ENCODE measurements at regions of chr3 and their contacts with region 1.

Region 1: DNA sequence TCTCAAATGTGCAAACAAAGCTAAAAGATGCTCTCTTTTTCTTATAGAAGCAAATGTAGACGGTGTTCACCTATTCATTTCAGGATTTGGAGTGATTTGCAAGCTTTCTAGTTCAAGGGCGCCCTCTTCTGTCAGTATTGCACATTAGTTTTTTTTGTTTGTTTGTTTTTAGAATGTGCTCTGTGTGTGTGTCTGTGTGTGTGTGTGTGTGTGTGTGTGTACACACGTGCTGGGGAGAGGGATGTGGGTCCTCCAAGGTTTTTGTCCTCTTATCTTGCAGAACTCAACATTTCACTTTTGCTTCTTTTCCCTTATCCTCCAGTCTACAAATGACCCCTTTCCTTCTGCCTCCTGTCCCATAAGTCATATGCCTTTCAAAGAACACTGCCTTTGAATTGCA is 23.5 kb downstream of the DNAH1 start:
- DNase-seq: peak; percentile 64
- H3K4me3 Mint-ChIP-seq: no peak overlapping the region
- H3K27ac Mint-ChIP-seq: no peak overlapping the region
- H3K4me1 Mint-ChIP-seq: peaks cover 3% of the 10 kb centered on the region
- H3K27me3 Mint-ChIP-seq: no peaks in the 10 kb centered on the region

Region 2: DNA sequence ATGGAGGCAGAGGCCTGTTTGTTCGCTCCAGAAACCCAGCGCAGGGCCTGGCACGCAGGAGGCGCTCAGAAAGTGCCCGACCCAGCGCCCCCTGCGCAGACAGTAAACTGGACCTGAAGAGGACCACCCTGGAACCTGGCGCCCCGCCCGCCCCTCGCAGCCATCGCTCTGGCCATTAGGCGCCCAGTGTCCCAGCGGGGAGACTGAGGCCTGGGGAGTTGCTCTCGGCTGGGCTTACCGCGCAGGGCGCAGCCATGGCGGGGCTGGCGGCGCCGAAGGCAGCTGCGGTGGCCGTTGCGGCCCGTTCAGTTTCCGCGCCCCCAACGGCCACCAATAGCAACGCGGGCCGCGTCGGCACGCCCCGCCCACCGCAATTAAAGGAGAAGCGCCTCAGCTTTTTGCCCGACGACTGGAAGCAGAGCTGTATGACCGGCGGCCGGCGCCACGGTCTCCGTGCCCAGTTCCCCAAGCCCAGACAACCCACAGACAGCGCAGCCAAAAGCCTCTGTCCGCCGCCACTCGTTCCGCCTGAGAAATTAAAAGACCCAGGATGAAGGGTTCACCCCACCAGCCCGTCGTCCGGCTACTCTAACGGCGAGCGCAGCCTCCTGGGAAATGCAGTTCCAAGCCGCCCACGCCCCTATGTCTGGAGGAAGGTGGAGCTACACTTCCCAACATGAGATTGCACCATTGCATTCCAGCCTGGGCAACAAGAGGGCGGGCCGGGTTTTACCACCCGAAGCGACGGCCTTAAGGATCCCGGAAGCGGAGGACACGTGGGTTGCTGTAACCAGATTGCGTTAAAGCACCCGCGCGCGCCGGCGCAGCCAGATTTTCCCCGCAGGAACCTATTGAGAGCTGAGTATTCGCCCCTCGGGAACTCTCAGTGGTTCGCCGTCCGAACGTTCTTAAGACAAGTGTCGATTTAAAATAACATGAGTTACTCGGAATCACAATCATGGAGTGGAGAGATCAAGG is 185.2 kb before region 1 on chr3 and contains the start of gene POC1A:
- CTCF ChIA-PET with region 1: interaction called, 5 read pairs
- intact Hi-C with region 1: loop called (anchors 1 kb)
- DNase-seq: peak; percentile 96
- H3K4me3 Mint-ChIP-seq: peak within 1 kb of the TSS; percentile 91
- H3K27ac Mint-ChIP-seq: peak within 1 kb of the TSS; percentile 92
- H3K4me1 Mint-ChIP-seq: peaks cover 18% of the 10 kb centered on the region
- H3K27me3 Mint-ChIP-seq: no peaks in the 10 kb centered on the region
- total RNA-seq, gene POC1A: 32.3 to 32.7 TPM

Region 3: DNA sequence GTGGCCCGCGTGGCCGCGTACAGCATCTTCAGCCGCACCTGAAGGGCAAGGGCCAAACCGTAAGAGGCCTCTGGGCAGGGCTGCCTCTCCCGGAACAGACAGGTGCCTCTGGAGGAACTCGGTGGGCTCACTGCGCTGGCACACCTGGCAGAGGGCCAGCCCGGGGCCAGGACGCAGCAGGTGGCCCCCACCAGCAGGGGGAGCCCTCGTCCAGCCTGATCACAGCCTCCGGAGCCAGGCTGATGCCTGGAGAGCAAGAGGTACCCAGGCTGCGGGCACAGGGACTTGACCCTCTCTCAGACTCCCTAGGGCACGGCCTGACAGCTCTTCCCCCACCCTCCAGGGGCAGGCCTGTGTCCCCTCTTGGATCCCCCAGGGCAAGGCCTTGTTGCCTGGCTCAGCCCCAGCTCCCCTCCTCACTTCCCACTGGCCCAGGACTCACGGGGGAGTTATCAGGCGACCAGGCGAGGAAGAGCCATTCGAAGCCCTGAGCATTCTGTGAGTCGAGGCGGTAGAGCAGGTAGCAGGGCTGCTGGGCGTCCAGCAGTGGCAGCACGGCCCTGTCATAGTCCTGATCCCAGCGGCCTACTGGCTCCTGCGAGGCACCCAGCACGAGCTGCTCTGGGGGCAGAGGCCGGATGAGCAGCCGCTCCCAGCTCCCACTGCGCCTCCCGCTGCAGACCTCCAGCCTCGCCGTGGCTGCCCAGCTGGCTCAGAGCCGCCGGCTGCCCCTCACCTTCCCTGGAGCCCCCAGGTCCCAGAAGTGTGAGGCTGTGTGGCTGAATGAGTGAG is 107.9 kb before region 1 on chr3:
- CTCF ChIA-PET with region 1: interaction called, 314 read pairs
- intact Hi-C with region 1: loop called (anchors 1 kb)
- DNase-seq: peak; percentile 89
- H3K4me3 Mint-ChIP-seq: no peak overlapping the region
- H3K27ac Mint-ChIP-seq: peak overlapping the region; percentile 88
- H3K4me1 Mint-ChIP-seq: peaks cover 45% of the 10 kb centered on the region
- H3K27me3 Mint-ChIP-seq: no peaks in the 10 kb centered on the region

Region 4: GRCh38 chr3:52291508-52292181 is 48.0 kb before region 1 on chr3:
- CTCF ChIA-PET with region 1: interaction called, 62 read pairs
- intact Hi-C with region 1: loop called (anchors 1 kb)
- DNase-seq: peak; percentile 51
- H3K4me3 Mint-ChIP-seq: no peak overlapping the region
- H3K27ac Mint-ChIP-seq: no peak overlapping the region
- H3K4me1 Mint-ChIP-seq: peaks cover 24% of the 10 kb centered on the region
- H3K27me3 Mint-ChIP-seq: no peaks in the 10 kb centered on the region

Region 5: DNA sequence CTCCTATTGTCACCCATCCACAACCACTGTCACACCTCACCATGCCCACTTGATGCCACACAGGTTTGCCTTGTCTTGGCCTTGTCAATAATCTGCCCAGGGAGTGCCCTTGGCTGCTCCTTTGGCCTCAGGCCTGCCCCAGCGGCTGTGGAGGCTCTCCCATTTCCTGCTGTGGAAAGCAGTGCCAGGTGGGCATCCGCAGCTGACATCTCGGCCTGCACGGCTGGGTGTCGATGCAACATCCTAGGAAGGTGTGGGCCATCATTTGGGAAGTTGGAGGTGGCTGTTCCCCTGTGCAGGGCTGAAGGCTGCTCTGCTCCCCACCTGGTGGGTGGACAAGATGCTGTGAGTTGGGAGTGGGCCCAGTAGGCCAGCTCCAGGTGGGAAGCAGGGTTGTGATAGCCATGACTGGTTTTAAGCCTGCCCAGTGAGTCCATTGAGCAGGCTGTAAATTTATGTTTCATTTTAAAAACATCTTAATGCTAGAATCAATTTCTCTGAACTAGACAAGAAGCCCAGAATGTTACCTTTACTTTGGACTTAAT is 11.0 kb before region 1 on chr3:
- CTCF ChIA-PET with region 1: interaction called, 12 read pairs
- intact Hi-C with region 1: no loop called
- DNase-seq: no peak
- H3K4me3 Mint-ChIP-seq: no peak overlapping the region
- H3K27ac Mint-ChIP-seq: no peak overlapping the region
- H3K4me1 Mint-ChIP-seq: no peaks in the 10 kb centered on the region
- H3K27me3 Mint-ChIP-seq: no peaks in the 10 kb centered on the region

Region 6: DNA sequence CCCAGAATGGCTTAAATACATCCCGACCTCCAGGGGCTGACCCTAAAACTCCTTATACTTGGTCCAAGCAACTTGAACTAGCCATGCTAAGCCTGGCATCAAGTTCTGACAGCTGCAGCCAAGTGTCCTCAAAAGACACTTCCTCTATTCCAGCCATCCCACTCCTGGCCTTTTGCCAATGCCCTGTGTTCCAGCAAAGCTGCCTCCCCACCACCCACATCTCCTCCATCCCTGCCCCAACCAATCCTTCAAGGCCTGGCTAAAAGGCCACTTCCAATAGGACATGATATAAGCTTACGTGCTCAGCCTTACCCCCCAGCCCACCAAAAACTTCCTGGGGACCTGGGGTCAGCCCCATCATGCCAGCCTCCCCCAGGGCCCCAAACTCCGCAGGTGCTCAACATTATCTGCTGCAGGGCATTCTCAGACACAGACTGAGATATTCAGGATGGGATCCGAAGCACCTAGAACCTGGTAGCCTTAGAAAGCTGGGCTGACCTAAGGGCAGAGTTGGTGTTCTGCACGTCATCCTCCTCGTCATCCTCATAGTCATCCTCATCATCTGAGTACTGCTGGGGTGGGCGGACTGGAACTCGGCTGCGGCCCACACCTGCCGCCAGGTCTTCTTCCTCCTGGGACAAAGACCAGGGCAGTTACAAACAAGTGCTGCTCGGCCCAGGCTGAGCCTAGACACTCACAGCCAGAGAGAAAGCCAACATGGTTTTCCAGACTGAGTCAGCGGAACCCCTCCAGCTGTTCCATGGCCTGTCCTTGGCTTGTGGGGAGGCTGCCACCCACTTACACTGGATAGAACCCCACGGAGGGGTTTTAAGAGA is 64.6 kb after region 1 on chr3:
- CTCF ChIA-PET with region 1: no interaction called
- intact Hi-C with region 1: no loop called
- DNase-seq: no peak
- H3K4me3 Mint-ChIP-seq: no peak overlapping the region
- H3K27ac Mint-ChIP-seq: no peak overlapping the region
- H3K4me1 Mint-ChIP-seq: peaks cover 20% of the 10 kb centered on the region
- H3K27me3 Mint-ChIP-seq: no peaks in the 10 kb centered on the region

Region 7: DNA sequence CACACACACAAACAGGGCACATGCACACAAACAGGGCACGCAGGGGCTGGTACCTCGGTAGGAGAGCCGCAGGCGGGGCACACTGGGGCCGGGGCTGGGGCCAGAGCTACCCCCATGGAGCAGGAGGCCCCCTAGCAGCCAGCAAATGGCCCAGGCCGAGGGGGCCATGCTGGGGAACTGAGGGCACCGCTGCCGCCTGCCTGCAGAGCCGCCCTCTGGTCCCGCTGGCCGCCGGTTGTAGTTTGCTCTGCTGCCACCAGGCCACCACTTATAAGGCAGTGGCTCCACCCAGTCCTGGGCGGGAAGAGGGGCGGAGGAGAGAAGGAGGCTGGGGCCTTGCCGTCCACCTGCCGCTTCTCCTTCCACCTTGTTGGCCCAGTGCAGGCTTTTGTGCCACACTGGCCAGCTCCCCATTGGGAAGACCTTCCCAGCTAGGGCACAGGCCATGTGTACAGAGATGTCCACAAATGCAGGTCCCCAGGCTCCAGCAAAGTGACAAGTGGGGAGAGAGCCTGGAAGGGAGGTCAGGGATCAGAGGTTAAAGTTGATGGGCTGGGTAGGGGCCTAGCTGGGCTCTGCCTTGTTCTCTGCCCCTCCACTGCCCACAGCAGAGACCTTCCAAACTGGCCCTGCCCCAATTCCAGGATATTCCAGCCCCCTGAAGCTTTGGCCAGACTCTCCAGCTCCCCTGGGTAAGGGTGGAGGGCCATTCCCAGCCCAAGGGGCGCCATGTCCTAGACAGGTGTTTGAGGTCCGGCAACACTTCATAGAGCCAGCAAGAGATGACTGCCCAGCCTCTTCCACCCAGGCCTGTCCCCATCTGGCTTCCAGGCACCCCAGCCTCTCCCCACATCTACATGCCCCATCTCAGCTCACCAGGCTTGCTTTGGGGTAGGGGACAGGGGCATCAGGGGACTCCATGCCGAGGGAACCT is 105.5 kb after region 1 on chr3 and contains the start of gene SEMA3G:
- CTCF ChIA-PET with region 1: interaction called, 5 read pairs
- intact Hi-C with region 1: loop called (anchors 5 kb)
- DNase-seq: peak; percentile 80
- H3K4me3 Mint-ChIP-seq: no peak within 1 kb of the TSS
- H3K27ac Mint-ChIP-seq: no peak within 1 kb of the TSS
- H3K4me1 Mint-ChIP-seq: peaks cover 4% of the 10 kb centered on the region
- H3K27me3 Mint-ChIP-seq: no peaks in the 10 kb centered on the region
- total RNA-seq, gene SEMA3G: not detected

Measured in activated naive CD4-positive, alpha-beta T cell treated with anti-CD3 and anti-CD28 coated beads for 36 hours (primary cell).